Activated CD4-positive, alpha-beta T cell treated with anti-CD3 and anti-CD28 coated beads, Interleukin-2, amount 10 ng/mL, durations not matched to agents 24 days and 14 days (primary cell): ENCODE measurements at regions of chr20 and their contacts with region 1.

Region 1: GRCh38 chr20:32743237-32744112 is at the start of gene COMMD7:
- DNase-seq: peak; percentile 92
- H3K4me3 Mint-ChIP-seq: peak within 1 kb of the TSS; percentile 93
- H3K27ac Mint-ChIP-seq: peak within 1 kb of the TSS; percentile 99
- H3K4me1 Mint-ChIP-seq: peaks cover 32% of the 10 kb centered on the region
- H3K27me3 Mint-ChIP-seq: no peaks in the 10 kb centered on the region
- total RNA-seq, gene COMMD7: 36.3 and 37.7 TPM in 2 replicates

Region 2: DNA sequence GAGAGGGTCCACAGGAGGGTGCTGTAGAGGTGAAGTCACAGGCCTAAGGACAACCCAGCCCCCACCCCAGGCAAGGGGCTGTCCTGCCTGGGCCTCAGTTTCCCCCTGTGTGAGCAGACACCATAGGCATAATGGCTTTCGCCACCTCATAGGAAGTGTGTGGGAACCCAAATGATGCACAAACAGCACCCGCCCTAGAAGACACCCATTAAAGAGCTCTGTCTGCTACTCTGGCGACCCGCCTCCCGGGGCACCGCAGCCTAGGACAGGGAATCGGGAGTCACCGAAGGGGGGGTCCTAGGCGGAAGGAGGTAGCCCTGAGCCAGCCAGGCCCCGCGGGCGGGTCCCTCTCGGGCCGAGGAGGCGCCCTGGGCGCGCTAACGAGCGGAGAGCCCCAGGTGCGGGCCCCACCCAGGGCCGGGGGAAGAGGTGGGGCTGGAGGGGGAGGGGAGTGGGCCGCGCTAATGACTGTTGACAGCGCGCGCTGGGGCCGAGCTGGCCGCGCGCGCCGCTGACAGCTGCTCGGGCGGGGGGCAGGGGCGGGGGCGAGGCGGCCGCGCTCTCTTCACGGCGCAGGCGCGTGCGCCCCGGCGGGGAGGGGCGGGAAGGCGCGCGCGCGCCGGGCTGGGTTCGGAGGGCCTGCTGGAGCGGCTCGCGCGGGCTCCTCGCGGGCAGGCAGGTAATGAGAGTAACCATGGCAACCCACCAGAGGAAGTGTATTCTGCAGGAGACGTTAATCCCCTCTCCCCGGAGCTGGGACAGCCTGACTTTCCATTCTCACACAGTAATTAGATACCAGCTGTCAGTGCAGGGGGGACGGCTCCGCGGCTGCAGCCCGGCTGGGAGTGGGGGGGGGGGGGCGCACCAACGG is 207.3 kb before region 1 on chr20:
- intact Hi-C with region 1: loop called (anchors 5 kb)
- DNase-seq: peak; percentile 93
- H3K4me3 Mint-ChIP-seq: peak overlapping the region; percentile 79
- H3K27ac Mint-ChIP-seq: peak overlapping the region; percentile 89
- H3K4me1 Mint-ChIP-seq: peaks cover 69% of the 10 kb centered on the region
- H3K27me3 Mint-ChIP-seq: no peaks in the 10 kb centered on the region

Region 3: DNA sequence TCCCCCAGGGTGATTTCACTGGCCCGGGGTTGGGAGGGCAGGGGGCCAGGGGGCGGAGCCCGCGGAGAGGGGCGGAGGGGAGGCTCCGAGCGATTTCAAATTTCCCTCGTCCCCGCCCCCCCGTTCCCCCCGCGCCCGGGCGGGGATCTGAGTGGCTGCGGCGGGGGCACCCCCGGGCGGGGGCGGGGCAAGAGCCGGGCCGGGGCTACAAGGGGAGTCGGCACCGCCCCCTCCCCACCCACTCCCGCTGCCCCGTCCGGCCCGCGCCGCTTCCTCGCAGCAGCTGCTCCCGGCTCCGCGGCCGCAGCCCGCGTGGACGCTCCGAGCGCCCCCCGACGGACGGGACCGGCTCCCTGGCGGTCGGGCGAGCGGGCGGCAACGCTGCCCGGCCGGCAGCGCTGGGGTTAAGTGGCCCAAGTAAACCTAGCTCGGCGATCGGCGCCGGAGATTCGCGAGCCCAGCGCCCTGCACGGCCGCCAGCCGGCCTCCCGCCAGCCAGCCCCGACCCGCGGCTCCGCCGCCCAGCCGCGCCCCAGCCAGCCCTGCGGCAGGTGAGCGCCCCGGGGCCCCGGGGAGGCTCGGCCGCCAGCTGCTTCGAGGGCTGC is 18.8 kb after region 1 on chr20 and contains the start of gene DNMT3B:
- intact Hi-C with region 1: loop called (anchors 2 kb)
- DNase-seq: peak; percentile 93
- H3K4me3 Mint-ChIP-seq: peak within 1 kb of the TSS; percentile 88
- H3K27ac Mint-ChIP-seq: peak within 1 kb of the TSS; percentile 71
- H3K4me1 Mint-ChIP-seq: peaks cover 11% of the 10 kb centered on the region
- H3K27me3 Mint-ChIP-seq: peaks cover 12% of the 10 kb centered on the region
- total RNA-seq, gene DNMT3B: 1.1 and 1.3 TPM in 2 replicates

Region 4: DNA sequence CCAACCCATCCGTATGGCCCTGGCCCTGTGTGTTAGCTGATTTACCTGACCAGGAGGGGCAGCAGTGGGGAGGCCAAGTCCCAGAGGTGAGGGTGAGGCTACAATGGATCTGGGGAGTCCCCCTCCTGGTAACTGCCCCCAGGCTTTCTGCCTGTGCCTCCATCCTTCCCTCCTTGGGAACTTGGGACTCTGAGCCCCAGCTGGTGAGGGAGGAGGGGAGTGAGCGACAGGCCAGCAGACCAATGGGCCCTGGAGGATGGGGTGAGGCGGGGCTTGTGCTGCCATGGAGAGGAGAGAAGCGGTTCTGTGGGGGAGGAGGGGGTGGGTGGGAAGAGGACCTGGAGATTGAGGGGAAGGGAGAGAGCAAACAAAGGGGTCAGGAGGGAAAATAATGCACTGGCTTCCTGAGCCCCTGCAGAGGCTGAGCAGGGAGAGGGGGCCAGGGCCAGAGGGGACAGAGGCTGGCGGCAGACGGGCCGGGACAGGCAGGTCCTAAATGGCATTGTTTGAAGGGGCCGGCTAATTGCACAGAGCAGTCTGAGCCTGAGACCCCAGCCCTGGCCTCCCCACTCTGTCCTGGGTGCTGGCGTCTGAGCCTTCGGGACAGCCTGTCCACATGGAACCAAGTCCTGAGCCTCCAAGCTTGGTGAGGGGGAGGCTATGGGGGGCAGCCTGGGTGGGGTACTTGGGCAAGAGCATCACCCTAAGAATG is 36.2 kb after region 1 on chr20:
- intact Hi-C with region 1: loop called (anchors 5 kb)
- DNase-seq: no peak
- H3K4me3 Mint-ChIP-seq: no peak overlapping the region
- H3K27ac Mint-ChIP-seq: no peak overlapping the region
- H3K4me1 Mint-ChIP-seq: peaks cover 5% of the 10 kb centered on the region
- H3K27me3 Mint-ChIP-seq: no peaks in the 10 kb centered on the region